ENCODE measurements at regions of chr4 and their contacts with region 1.

Region 1: GRCh38 chr4:81405894-81406401 is 65.8 kb downstream of the RASGEF1B start:
- DNase-seq: no peak
- ATAC-seq: peak; percentile 78

Region 2: DNA sequence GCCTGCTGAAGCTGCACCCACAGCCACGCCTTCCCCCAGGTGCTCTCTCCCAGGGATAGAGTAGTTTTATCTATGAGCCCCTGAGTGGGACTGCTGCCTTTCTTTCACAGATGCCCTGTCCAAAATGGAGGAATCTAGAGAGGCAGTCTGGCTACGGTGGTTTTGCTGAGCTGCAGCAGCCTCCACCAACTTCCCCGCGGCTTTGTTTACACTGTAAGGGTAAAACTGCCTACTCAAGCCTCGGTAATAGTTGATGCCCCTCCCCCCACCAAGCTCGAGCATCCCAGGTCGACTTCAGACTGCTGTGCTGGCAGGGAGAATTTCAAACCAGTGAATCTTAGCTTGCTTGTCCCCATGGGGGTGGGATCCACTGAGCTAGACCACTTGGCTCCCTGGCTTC is 275.4 kb before region 1 on chr4:
- intact Hi-C with region 1: no loop called
- DNase-seq: no peak
- ATAC-seq: no peak

Region 3: GRCh38 chr4:81844717-81845116 is 438.8 kb after region 1 on chr4:
- intact Hi-C with region 1: loop called (anchors 5 kb)
- DNase-seq: no peak
- ATAC-seq: peak; percentile 87

Region 4: DNA sequence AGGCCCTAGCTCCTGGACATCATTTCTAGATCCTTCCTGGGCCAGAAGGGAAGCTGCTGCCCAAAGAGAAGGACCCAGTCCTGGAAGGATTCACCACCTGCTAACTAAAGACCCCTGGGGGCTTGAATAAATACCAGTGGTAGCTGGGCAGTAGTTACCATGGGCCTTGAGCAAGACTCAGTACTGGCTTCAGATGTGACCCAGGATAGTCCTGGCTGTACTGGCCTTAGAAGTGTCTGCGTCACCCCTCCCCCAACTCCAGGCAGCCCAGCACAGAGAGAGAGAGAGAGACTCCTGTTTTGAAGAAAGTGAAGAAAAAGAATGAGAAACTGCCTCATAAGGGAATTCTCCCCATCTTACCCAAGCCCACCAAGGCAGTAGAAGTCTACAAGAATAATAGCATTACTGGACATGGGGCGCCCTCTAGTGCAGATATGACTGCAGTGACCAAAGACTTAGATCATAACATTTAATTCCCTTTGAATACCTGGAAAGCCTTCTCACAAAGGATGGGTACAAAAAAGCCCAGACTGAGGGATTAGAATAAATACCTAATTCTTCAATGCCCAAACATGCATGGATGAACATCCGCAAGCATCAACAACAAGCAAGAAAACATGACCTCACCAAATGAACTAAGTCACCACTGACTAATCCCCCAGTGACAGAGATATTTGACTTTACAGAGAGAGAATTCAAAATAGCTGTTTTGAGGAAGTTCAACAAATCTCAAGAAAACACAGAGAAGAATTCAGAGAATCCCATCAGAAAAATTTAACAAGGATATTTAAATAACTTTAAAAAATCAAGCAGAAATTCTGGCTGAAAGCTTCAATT is 796.1 kb after region 1 on chr4:
- intact Hi-C with region 1: loop called (anchors 5 kb)
- DNase-seq: no peak
- ATAC-seq: no peak

Region 5: GRCh38 chr4:82268050-82268825 is 862.3 kb after region 1 on chr4:
- intact Hi-C with region 1: loop called (anchors 1 kb)
- DNase-seq: no peak
- ATAC-seq: peak; percentile 97

Measured in Right ventricle myocardium inferior (tissue), 1 donor.